ENCODE measurements at regions of chr2 and their contacts with region 1.

Region 1: GRCh38 chr2:168455648-168456520 is at the start of gene CERS6:
- DNase-seq: peak; percentile 97 to 99 (median 99)
- ATAC-seq: peak; percentile 99
- H3K4me3 ChIP-seq: peak within 1 kb of the TSS; percentile 68
- H3K27ac ChIP-seq: peak within 1 kb of the TSS; percentile 69
- H3K4me1 ChIP-seq: no peaks in the 10 kb centered on the region
- H3K27me3 ChIP-seq: no peaks in the 10 kb centered on the region
- total RNA-seq, gene CERS6: 47.6 to 71.5 (median 52.5) TPM

Region 2: DNA sequence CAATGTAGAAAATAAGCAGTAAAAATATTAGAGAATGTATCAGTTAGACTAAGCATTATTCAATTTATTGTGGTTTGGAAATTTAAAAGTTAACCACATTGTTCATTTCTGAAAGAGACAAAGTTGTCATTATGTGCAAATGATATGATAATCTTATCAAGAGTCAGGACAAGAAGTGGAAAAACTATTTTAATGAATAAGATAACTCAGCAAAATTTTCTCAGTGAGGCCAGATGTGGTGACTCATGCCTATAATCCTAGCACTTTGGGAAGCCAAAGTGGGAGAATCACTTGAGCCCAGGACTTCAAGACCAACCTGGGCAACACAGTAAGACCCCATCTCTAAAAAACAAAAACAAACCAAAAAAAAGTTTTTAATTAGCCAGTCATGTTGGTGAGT is 39.3 kb before region 1 on chr2:
- intact Hi-C with region 1: no loop called
- DNase-seq: no peak
- ATAC-seq: no peak
- H3K4me3 ChIP-seq: no peak overlapping the region
- H3K27ac ChIP-seq: no peak overlapping the region
- H3K4me1 ChIP-seq: no peaks in the 10 kb centered on the region
- H3K27me3 ChIP-seq: no peaks in the 10 kb centered on the region

Region 3: GRCh38 chr2:168583064-168583709 is 127.3 kb after region 1 on chr2:
- intact Hi-C with region 1: loop called in 1 of 4 experiments (anchors 10 kb)
- DNase-seq: no peak
- ATAC-seq: peak; percentile 44 to 57
- H3K4me3 ChIP-seq: no peak overlapping the region
- H3K27ac ChIP-seq: no peak overlapping the region
- H3K4me1 ChIP-seq: peaks cover 2% of the 10 kb centered on the region
- H3K27me3 ChIP-seq: no peaks in the 10 kb centered on the region

Region 4: GRCh38 chr2:168614172-168615018 is 158.5 kb after region 1 on chr2:
- intact Hi-C with region 1: no loop called
- DNase-seq: no peak
- ATAC-seq: no peak
- H3K4me3 ChIP-seq: no peak overlapping the region
- H3K27ac ChIP-seq: no peak overlapping the region
- H3K4me1 ChIP-seq: peaks cover 2% of the 10 kb centered on the region
- H3K27me3 ChIP-seq: no peaks in the 10 kb centered on the region

Region 5: DNA sequence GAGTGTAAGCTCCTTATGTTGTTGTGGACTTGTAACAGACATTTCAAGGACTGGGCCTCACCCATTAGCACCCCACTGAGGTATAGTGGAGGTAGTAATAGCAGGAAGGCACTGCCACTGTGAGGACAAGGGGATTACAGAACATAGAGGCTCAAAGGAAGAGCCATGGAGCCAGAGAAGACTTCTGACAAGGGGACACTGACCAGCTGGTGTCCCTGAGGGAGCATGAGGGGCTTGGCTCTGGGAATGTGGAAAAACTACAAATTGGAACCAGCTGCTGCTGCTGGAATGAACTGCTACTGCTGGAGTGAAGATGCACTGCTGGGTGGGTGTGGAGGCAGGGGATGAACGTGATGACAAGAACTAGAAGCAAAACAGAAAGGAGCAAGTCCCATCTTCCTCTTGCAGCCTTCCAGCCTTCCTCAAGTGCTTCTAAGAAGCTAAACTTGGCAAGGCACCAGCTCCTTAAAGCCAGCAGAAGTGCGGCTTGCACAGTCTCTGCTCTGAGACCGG is 179.2 kb after region 1 on chr2:
- intact Hi-C with region 1: loop called in 1 of 4 experiments (anchors 5 kb)
- DNase-seq: peak; percentile 38 to 76 (median 65)
- ATAC-seq: peak; percentile 42 to 55
- H3K4me3 ChIP-seq: no peak overlapping the region
- H3K27ac ChIP-seq: peak overlapping the region; percentile 67
- H3K4me1 ChIP-seq: peaks cover 10% of the 10 kb centered on the region
- H3K27me3 ChIP-seq: no peaks in the 10 kb centered on the region

Region 6: GRCh38 chr2:168687314-168687713 is 231.4 kb after region 1 on chr2:
- intact Hi-C with region 1: loop called in 1 of 4 experiments (anchors 10 kb)
- DNase-seq: no peak
- ATAC-seq: peak; percentile 51 to 57
- H3K4me3 ChIP-seq: no peak overlapping the region
- H3K27ac ChIP-seq: no peak overlapping the region
- H3K4me1 ChIP-seq: peaks cover 7% of the 10 kb centered on the region
- H3K27me3 ChIP-seq: no peaks in the 10 kb centered on the region